ENCODE measurements at regions of chr5 and their contacts with region 1.

Region 1: GRCh38 chr5:154467655-154468354 is 10.2 kb downstream of the HAND1 start:
- DNase-seq: no peak
- H3K4me3 ChIP-seq: no peak overlapping the region
- H3K27me3 ChIP-seq: peaks cover 21% of the 10 kb centered on the region
- CTCF ChIP-seq: peak; percentile 94

Region 2: DNA sequence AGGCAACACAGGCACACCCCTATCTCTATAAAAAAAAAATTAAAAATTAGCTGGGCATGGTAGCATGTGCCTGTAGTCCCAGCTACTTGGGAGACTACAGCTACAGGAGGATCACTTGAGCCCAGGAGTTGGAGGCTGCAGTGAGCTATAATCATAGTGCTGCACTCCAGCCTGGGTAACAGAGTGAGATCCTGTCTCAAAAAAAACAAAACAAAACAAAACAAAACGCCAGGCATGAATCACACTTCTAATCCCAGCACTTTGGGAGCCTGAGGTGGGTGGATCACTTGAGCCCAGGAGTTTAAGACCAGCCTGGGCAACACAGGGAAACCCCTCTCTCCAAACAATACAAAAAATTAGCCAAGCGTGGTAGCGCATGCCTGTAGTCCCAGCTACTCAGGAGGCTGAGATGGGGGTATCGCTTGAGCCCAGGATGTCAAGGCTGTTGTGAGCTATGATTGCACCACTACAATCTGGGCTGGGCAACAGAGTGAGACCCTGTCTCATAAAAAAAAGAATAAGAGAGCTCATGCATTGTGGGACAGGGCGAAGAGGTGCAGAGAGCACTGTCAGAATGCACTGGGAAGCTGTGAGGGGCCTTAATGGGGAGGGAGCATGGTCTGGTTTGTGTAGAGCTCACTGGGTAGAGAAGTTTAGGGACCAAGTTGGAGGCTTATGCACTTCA is 30.4 kb before region 1 on chr5:
- CTCF ChIA-PET with region 1: no interaction called
- POLR2A ChIA-PET with region 1: no interaction called
- DNase-seq: no peak
- H3K4me3 ChIP-seq: no peak overlapping the region
- H3K27me3 ChIP-seq: no peaks in the 10 kb centered on the region
- CTCF ChIP-seq: no peak

Region 3: GRCh38 chr5:154449786-154450185 is 18.0 kb before region 1 on chr5:
- CTCF ChIA-PET with region 1: interaction called, 13 read pairs
- POLR2A ChIA-PET with region 1: no interaction called
- DNase-seq: no peak
- H3K4me3 ChIP-seq: no peak overlapping the region
- H3K27me3 ChIP-seq: no peaks in the 10 kb centered on the region
- CTCF ChIP-seq: no peak

Region 4: DNA sequence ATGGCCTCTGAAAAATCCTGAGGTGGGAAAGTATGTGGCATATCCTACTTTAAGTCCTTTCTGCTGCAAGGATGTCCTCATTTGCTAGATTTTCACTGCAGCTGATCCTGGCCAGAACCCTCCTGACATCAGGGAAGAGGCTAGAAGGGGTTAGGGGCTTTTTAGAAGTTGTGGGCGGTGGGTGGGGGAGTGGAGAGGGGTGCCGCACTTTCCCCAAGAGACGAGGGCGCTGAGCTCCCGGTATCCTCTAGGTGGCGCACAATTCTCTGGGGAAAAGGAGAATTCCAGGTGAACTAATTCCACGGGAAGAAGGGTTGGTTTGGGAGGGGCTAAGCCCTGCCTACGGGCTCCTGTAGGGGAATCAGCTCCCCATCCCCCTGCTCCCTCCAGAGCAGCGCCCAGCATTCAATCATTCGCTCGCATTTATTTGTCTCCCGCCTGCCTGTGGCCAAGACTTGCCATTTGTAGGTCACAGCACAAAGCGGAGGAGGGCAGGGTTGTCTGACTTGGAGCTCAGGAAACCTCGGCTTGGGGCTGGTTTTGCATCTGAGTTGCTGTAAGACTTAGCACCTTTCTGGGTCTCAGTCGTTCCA is 53.2 kb after region 1 on chr5:
- CTCF ChIA-PET with region 1: interaction called, 15 read pairs
- POLR2A ChIA-PET with region 1: no interaction called
- DNase-seq: no peak
- H3K4me3 ChIP-seq: no peak overlapping the region
- H3K27me3 ChIP-seq: peaks cover 4% of the 10 kb centered on the region
- CTCF ChIP-seq: peak; percentile 82

Region 5: GRCh38 chr5:154618696-154619095 is 150.9 kb after region 1 on chr5:
- CTCF ChIA-PET with region 1: interaction called, 93 read pairs
- POLR2A ChIA-PET with region 1: no interaction called
- DNase-seq: no peak
- H3K4me3 ChIP-seq: no peak overlapping the region
- H3K27me3 ChIP-seq: peaks cover 3% of the 10 kb centered on the region
- CTCF ChIP-seq: no peak

Region 6: DNA sequence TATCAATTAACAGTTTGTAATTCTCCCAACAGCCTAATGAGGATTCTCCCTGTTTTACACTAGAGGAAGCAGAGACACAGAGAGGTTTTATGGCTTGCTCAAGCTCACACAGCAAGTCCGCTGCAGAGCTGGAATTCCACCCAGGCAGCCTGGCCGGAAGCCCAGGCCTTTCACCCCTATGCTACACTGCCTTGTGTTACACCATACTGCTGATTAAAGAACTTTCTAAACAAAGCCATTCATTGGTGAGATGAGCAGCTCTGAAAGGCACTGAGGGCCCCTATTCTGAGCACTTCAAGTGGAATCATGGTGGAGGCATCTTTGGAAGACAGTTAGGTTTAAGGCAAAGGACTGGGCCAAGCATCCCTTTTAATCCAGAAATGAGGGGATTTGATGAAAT is 272.7 kb after region 1 on chr5:
- CTCF ChIA-PET with region 1: no interaction called
- POLR2A ChIA-PET with region 1: no interaction called
- DNase-seq: no peak
- H3K4me3 ChIP-seq: no peak overlapping the region
- H3K27me3 ChIP-seq: no peaks in the 10 kb centered on the region
- CTCF ChIP-seq: no peak

Measured in BJ (cell line).